ENCODE measurements at regions of chr14 and their contacts with region 1.

Region 1: DNA sequence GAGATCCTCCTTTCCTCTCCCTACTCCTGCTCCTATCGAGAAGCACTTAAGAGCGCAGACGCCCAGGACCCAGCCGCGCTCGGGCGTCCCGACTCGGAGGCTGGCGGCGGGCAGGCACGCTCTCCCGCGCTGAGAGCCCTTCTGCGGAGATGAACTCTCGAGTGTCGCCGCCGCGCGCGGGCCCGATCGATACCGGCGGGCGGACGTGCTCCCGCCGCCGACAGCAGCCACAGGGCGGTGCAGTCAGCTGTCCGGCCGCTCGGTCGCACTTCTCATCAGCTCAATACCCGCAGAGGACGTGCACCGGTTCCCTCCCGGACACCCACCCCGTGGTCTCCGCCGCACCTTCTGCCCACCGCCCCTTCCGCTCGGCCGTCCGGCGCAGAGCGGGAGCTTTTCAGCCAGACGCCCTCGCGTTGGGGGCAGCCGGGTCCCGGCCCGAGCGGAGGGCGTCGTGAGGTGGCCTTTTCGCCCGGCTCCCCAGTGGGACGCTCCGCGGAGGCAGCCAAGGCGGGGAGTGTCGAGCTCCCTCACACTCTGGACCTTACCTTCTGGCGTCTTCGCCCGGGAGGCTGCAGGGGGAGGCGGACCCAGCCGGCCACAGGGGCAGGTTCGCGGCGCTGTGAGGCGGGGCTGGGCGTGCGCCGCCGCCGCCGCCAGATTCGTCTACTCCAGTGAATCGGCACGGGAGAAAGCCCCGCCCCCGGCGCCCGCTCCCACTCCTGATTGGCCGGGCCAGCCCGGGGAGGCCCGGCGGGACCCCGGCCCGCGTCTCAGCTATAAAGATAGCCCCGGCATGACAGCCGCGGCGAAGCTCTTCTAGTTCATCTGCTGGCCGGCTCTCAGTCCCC is at the start of gene INSM2:
- DNase-seq: peak; percentile 87 to 93
- H3K4me3 ChIP-seq: peak within 1 kb of the TSS; percentile 62
- H3K4me3 Mint-ChIP-seq: peak within 1 kb of the TSS; percentile 88
- H3K27ac Mint-ChIP-seq: no peak within 1 kb of the TSS
- H3K4me1 ChIP-seq: peaks cover 12% of the 10 kb centered on the region
- H3K4me1 Mint-ChIP-seq: peaks cover 7% of the 10 kb centered on the region
- H3K27me3 ChIP-seq: no peaks in the 10 kb centered on the region; the same call in 1 of the 2 replicates
- H3K27me3 Mint-ChIP-seq: peaks cover 26% of the 10 kb centered on the region
- CTCF ChIP-seq: peak in 1 of 2 experiments; percentile 2
- total RNA-seq, gene INSM2: 0.14 TPM in 1 of 2 replicates, not detected in the other

Region 2: DNA sequence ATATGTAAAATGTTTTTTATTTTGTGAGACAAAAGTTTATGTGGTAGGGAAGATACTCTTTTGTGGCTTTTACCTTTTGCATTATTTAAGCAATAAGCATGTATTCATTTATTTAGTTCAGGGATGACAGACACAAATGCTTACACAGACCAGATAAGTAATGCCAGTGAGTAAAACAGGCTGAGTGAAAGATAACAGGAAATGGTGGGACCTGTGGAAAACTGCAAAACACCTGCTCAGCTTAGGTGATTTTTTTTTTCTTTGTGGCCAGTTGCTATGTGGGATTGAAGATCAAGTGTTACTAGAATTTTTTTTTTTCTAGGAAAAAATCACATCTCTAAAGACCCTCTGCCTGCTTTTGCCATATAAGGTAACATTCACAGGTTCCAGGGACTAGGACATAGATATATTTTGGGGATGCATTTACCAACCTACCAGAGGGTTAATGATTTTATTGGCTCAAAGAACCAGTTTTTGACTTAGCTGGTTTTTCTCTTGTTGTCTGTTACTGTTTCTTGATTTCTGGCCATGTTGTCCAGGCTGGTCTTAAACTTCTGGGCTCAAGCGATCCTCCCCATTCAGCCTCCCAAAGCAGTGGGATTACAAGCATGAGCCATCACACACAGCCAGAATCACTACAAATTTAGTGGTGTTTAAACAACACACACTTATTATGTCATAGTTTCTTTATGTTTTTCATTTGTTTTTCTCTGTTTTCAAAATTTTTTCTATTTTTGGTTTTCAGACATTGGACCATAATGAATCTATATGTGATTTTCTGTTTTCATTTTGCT is 231.7 kb before region 1 on chr14:
- CTCF ChIA-PET with region 1: no interaction called
- POLR2A ChIA-PET with region 1: no interaction called
- intact Hi-C with region 1: no loop called
- DNase-seq: no peak
- H3K4me3 ChIP-seq: no peak overlapping the region
- H3K4me3 Mint-ChIP-seq: no peak overlapping the region
- H3K27ac Mint-ChIP-seq: no peak overlapping the region
- H3K4me1 ChIP-seq: no peaks in the 10 kb centered on the region
- H3K4me1 Mint-ChIP-seq: peaks cover 7% of the 10 kb centered on the region
- H3K27me3 ChIP-seq: no peaks in the 10 kb centered on the region
- H3K27me3 Mint-ChIP-seq: no peaks in the 10 kb centered on the region
- CTCF ChIP-seq: no peak

Region 3: DNA sequence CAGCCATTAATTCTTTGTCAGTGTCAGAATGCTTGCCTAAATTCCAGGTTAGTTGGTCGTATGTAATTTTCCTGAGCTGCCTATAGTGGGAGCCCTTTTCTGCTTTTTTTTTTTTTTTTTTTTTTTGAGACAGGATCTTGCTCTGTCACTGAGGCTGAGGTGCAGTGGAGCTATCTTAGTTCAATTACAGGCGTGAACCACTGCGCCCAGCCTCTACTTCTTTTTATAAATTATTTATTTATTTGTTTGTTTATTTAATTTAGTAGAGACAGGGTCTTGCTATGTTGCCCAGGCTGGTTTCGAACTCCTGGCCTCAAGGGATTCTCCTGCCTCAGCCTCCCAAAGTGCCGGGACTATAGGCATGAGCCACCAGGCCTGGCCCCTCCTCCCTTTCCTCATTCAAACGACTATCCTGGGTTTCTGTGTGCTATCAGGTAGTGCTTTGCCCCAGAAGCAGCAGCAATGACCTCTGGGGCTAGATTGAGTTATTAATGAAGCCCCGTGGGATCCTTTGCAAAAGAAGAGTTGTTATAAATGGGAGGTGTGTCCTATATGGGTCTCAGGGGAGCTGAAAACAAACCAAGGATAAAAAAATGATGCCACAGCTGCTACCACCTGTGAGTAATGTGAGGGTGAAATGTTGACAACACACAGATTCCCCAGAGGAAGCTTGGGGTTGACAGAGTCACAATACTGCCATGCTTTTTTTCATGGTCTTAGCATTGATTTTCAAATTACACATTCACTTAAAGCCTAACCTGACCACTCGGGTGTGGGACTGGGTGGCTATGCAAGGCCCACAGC is 94.5 kb before region 1 on chr14:
- CTCF ChIA-PET with region 1: interaction called, 14 read pairs
- POLR2A ChIA-PET with region 1: no interaction called
- intact Hi-C with region 1: loop called (anchors 2 kb)
- DNase-seq: no peak
- H3K4me3 ChIP-seq: no peak overlapping the region
- H3K4me3 Mint-ChIP-seq: no peak overlapping the region
- H3K27ac Mint-ChIP-seq: no peak overlapping the region
- H3K4me1 ChIP-seq: peaks cover 13% of the 10 kb centered on the region
- H3K4me1 Mint-ChIP-seq: no peaks in the 10 kb centered on the region
- H3K27me3 ChIP-seq: no peaks in the 10 kb centered on the region
- H3K27me3 Mint-ChIP-seq: no peaks in the 10 kb centered on the region
- CTCF ChIP-seq: peak; percentile 54 to 66

Region 4: GRCh38 chr14:35565871-35566464 is 32.4 kb after region 1 on chr14:
- CTCF ChIA-PET with region 1: no interaction called
- POLR2A ChIA-PET with region 1: no interaction called
- intact Hi-C with region 1: no loop called
- DNase-seq: no peak
- H3K4me3 ChIP-seq: no peak overlapping the region
- H3K4me3 Mint-ChIP-seq: no peak overlapping the region
- H3K27ac Mint-ChIP-seq: no peak overlapping the region
- H3K4me1 ChIP-seq: no peaks in the 10 kb centered on the region
- H3K4me1 Mint-ChIP-seq: no peaks in the 10 kb centered on the region
- H3K27me3 ChIP-seq: no peaks in the 10 kb centered on the region
- H3K27me3 Mint-ChIP-seq: no peaks in the 10 kb centered on the region
- CTCF ChIP-seq: no peak

Region 5: DNA sequence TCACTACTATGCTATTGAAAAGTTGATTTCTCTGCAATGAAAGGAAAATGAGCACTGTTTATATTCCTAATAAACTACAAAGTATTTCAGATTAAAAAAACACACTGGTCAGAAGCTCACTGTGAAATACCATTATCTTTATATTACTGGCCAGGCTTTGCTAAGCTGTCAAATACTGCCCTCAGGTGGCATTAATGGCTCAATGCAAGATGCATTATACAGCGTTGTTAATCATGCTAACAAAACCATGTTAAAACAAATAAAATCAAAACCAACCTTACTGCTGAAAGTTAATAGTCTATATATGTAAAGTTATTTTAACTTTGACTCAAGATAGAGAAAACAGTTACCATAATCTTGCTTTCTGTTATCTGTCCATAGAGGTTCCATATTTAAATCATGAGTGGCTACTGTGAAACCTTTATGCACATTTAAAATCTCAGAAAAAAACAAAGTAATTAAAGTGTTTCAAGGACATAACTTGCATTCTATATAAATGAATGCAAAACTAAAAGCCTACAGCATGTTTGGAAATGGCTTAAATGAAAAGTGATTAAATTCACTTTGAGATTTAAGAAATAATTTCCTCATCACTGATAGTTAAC is 153.9 kb after region 1 on chr14:
- CTCF ChIA-PET with region 1: interaction called, 8 read pairs
- POLR2A ChIA-PET with region 1: no interaction called
- intact Hi-C with region 1: loop called (anchors 1 kb)
- DNase-seq: peak; percentile 47 to 59
- H3K4me3 ChIP-seq: no peak overlapping the region
- H3K4me3 Mint-ChIP-seq: no peak overlapping the region
- H3K27ac Mint-ChIP-seq: no peak overlapping the region
- H3K4me1 ChIP-seq: no peaks in the 10 kb centered on the region
- H3K4me1 Mint-ChIP-seq: no peaks in the 10 kb centered on the region
- H3K27me3 ChIP-seq: no peaks in the 10 kb centered on the region
- H3K27me3 Mint-ChIP-seq: no peaks in the 10 kb centered on the region
- CTCF ChIP-seq: peak; percentile 73 to 76